IMR-90 (cell line): ENCODE measurements at regions of chr15 and their contacts with region 1.

Region 1: GRCh38 chr15:45457641-45458433 is 64.7 kb downstream of the SLC30A4 start:
- DNase-seq: peak; percentile 77
- ATAC-seq: peak; percentile 64
- H3K4me3 ChIP-seq: peak overlapping the region; percentile 28; the same call in 1 of the 2 replicates
- H3K27ac ChIP-seq: no peak overlapping the region
- H3K4me1 ChIP-seq: peaks cover 19% of the 10 kb centered on the region
- H3K27me3 ChIP-seq: no peaks in the 10 kb centered on the region
- CTCF ChIP-seq: peak; percentile 91
- POLR2A ChIP-seq: peak; percentile 35; the same call in 1 of the 2 replicates
- RAD21 ChIP-seq: peak; percentile 95

Region 2: GRCh38 chr15:45129651-45130191 is 328.1 kb before region 1 on chr15 and contains the starts of genes DUOX1 and DUOXA1:
- CTCF ChIA-PET with region 1: no interaction called
- POLR2A ChIA-PET with region 1: no interaction called
- dilution Hi-C with region 1: no loop called
- in situ Hi-C with region 1: no loop called
- intact Hi-C with region 1: no loop called
- DNase-seq: no peak
- ATAC-seq: peak; percentile 62
- H3K4me3 ChIP-seq: no peak within 1 kb of the TSS
- H3K27ac ChIP-seq: no peak within 1 kb of the TSS
- H3K4me1 ChIP-seq: no peaks in the 10 kb centered on the region; the same call in 1 of the 2 replicates
- H3K27me3 ChIP-seq: peaks cover 82% of the 10 kb centered on the region
- CTCF ChIP-seq: no peak
- POLR2A ChIP-seq: no peak
- RAD21 ChIP-seq: no peak
- total RNA-seq, gene DUOX1: not detected in 2 replicates
- total RNA-seq, gene DUOXA1: not detected in 2 replicates

Region 3: DNA sequence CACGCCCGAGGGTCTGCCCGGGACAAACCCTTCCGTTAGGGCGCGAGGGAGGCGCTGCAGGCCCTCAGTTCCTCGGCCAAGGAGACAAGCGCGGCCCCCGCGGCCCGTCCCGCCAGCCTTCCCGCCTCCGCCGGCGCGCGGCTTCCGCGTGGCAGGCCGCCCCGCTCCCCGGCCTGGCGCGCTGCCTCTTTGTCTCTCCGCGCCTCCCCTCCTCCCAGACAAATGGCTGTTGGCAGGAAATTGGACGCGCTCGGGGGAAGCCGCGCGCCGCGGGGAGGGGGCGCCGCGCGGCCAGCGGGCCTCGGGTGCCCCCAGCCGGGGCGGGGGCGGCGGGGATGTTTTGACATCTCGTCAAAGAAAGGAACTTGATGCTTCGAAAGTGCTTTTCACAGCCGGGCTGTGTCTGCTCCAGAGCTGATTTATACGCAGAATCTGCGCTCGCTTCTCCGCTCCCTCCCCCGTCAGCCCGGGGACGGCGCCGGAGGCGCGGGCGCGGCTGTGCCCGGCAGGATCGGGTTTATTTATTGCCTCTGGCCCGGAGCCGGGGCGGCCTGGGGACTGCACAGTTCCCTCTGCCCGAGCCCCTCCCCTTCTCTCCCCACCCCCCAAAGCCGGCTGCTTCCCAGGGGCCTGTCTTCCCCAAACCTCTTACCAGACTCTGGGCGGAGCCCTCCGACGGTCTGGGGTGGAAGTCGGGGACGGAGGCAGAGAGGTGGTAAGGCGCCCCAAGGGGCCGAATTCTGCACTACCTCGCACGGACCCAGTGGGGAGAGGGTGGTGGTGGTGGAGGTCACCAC is 290.8 kb before region 1 on chr15:
- CTCF ChIA-PET with region 1: no interaction called
- POLR2A ChIA-PET with region 1: no interaction called
- dilution Hi-C with region 1: no loop called
- in situ Hi-C with region 1: no loop called
- intact Hi-C with region 1: loop called (anchors 1 kb)
- DNase-seq: peak; percentile 75
- ATAC-seq: peak; percentile 85
- H3K4me3 ChIP-seq: peak overlapping the region; percentile 59
- H3K27ac ChIP-seq: peak overlapping the region; percentile 91
- H3K4me1 ChIP-seq: peaks cover 8% of the 10 kb centered on the region
- H3K27me3 ChIP-seq: no peaks in the 10 kb centered on the region
- CTCF ChIP-seq: peak; percentile 65
- POLR2A ChIP-seq: peak; percentile 46; the same call in 1 of the 2 replicates
- RAD21 ChIP-seq: peak; percentile 39

Region 4: GRCh38 chr15:45307230-45307924 is 150.5 kb before region 1 on chr15:
- CTCF ChIA-PET with region 1: no interaction called
- POLR2A ChIA-PET with region 1: no interaction called
- dilution Hi-C with region 1: no loop called
- in situ Hi-C with region 1: no loop called
- intact Hi-C with region 1: loop called (anchors 1 kb)
- DNase-seq: peak; percentile 59
- ATAC-seq: peak; percentile 81
- H3K4me3 ChIP-seq: peak overlapping the region; percentile 28; the same call in 1 of the 2 replicates
- H3K27ac ChIP-seq: no peak overlapping the region
- H3K4me1 ChIP-seq: no peaks in the 10 kb centered on the region
- H3K27me3 ChIP-seq: peaks cover 2% of the 10 kb centered on the region; the same call in 1 of the 2 replicates
- CTCF ChIP-seq: peak; percentile 50
- POLR2A ChIP-seq: no peak
- RAD21 ChIP-seq: peak; percentile 20; the same call in 1 of the 2 replicates

Region 5: DNA sequence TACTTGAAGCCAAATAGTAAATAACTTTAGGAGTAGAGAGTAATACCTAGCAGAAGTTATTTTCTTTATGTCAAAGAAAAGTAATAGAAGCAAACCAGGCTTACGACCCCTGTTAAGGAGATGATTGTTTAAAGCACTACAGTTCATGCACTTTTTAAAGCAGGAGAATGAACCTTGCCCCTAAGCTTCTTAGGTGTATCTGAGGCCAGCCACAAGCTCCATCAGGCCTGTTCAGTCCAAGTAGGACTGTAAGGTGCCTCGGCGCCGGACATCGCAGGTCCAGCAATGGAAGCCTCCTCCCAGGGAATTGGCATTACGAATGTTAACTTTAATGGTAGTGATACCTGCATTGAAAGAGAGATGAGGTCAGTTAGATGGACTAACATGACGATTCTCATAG is 96.0 kb before region 1 on chr15:
- CTCF ChIA-PET with region 1: no interaction called
- POLR2A ChIA-PET with region 1: no interaction called
- dilution Hi-C with region 1: no loop called
- in situ Hi-C with region 1: no loop called
- intact Hi-C with region 1: no loop called
- DNase-seq: no peak
- ATAC-seq: no peak
- H3K4me3 ChIP-seq: no peak overlapping the region
- H3K27ac ChIP-seq: no peak overlapping the region
- H3K4me1 ChIP-seq: no peaks in the 10 kb centered on the region
- H3K27me3 ChIP-seq: peaks cover 3% of the 10 kb centered on the region
- CTCF ChIP-seq: no peak
- POLR2A ChIP-seq: no peak
- RAD21 ChIP-seq: no peak

Region 6: GRCh38 chr15:45429974-45430792 is 27.7 kb before region 1 on chr15:
- CTCF ChIA-PET with region 1: interaction called, 48 read pairs
- POLR2A ChIA-PET with region 1: interaction called, 5 read pairs
- dilution Hi-C with region 1: no loop called
- in situ Hi-C with region 1: no loop called
- intact Hi-C with region 1: loop called (anchors 1 kb)
- DNase-seq: peak; percentile 46
- ATAC-seq: peak; percentile 95
- H3K4me3 ChIP-seq: peak overlapping the region; percentile 60
- H3K27ac ChIP-seq: no peak overlapping the region
- H3K4me1 ChIP-seq: no peaks in the 10 kb centered on the region
- H3K27me3 ChIP-seq: peaks cover 2% of the 10 kb centered on the region; the same call in 1 of the 2 replicates
- CTCF ChIP-seq: peak; percentile 100; the same call in 1 of the 2 replicates
- POLR2A ChIP-seq: 0 out of 2 replicates have a peak, but pooled peaks have one; percentile 24
- RAD21 ChIP-seq: peak; percentile 95

Region 7: GRCh38 chr15:45587095-45587860 is 129.4 kb after region 1 on chr15 and contains the start of gene BLOC1S6:
- CTCF ChIA-PET with region 1: interaction called, 3 read pairs
- POLR2A ChIA-PET with region 1: no interaction called
- dilution Hi-C with region 1: no loop called
- in situ Hi-C with region 1: no loop called
- intact Hi-C with region 1: loop called (anchors 1 kb)
- DNase-seq: peak; percentile 90
- ATAC-seq: peak; percentile 85
- H3K4me3 ChIP-seq: peak within 1 kb of the TSS; percentile 67
- H3K27ac ChIP-seq: peak within 1 kb of the TSS; percentile 92
- H3K4me1 ChIP-seq: peaks cover 3% of the 10 kb centered on the region; the same call in 1 of the 2 replicates
- H3K27me3 ChIP-seq: no peaks in the 10 kb centered on the region
- CTCF ChIP-seq: no peak
- POLR2A ChIP-seq: peak; percentile 86
- RAD21 ChIP-seq: no peak
- total RNA-seq, gene BLOC1S6: 40.9 and 78.3 TPM in 2 replicates

Region 8: DNA sequence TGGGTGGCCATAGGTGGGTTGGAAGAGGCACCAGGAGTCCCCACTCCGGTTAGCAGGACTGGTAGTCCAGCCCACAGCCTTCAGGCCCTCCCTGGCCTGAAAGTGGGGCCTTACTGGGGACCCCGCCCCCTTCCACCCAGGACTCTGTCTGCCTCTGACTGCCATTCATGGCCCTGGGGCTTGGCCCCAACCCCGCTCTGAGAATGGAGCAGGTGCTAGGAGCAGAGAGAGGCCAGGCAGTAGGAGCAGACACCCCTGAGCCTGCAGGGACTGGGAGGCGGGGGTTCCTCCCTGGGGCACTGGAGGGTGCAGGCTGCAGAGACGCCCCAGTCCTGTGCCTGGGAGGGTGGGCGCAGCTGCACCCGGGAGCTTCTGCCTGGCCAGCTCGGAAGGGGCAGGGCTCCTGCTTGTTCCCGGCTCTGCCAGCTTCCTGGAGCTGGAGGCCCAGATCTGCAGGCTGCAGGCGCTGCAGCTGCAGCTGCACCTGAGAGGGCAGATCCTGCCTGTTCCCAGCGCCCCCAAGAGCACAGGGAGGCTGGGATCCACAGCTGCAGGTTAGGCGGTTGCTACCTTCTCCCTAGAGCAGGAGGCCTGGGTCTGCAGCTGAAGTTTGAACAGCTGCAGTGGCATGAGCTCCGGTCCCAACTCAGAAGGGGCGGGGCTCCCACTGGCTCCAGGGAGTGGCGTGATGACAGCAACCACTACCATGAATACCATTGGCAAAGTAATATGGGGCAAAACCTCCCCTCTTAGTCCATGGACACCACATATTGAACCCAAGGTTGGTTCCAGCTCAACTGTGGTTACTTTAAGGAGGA is 371.7 kb after region 1 on chr15:
- CTCF ChIA-PET with region 1: no interaction called
- POLR2A ChIA-PET with region 1: no interaction called
- dilution Hi-C with region 1: no loop called
- in situ Hi-C with region 1: no loop called
- intact Hi-C with region 1: no loop called
- DNase-seq: no peak
- ATAC-seq: no peak
- H3K4me3 ChIP-seq: no peak overlapping the region
- H3K27ac ChIP-seq: no peak overlapping the region
- H3K4me1 ChIP-seq: no peaks in the 10 kb centered on the region
- H3K27me3 ChIP-seq: no peaks in the 10 kb centered on the region
- CTCF ChIP-seq: no peak
- POLR2A ChIP-seq: no peak
- RAD21 ChIP-seq: no peak